ENCODE measurements at regions of chr9 and their contacts with region 1.

Region 1: GRCh38 chr9:7123743-7124142 is 366.0 kb downstream of the KDM4C start:
- DNase-seq: no peak
- H3K4me3 ChIP-seq: no peak overlapping the region
- H3K27ac ChIP-seq: no peak overlapping the region
- H3K4me1 ChIP-seq: no peaks in the 10 kb centered on the region
- H3K27me3 ChIP-seq: no peaks in the 10 kb centered on the region
- CTCF ChIP-seq: no peak

Region 2: DNA sequence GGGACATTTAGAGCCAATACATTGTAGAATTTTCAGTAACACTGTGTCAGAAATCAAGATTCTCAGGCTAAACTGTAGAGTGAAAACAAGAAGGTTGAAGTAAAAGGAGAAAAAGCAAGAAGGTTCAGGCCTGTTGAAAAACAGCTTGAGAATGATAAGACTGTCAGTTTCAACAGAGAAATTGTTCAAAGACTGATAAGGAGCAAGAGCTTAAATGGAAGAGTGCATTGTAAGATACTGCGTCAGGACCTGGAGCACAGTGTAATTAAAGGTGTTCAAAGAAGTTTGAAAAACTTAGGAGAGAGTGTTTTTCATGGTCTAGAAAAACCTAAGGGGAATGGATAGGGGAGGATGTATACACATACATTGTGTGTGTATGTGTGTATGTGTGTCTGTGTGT is 42.3 kb after region 1 on chr9:
- intact Hi-C with region 1: loop called (anchors 2 kb)
- DNase-seq: no peak
- H3K4me3 ChIP-seq: no peak overlapping the region
- H3K27ac ChIP-seq: no peak overlapping the region
- H3K4me1 ChIP-seq: no peaks in the 10 kb centered on the region
- H3K27me3 ChIP-seq: no peaks in the 10 kb centered on the region
- CTCF ChIP-seq: no peak

Measured in tibial artery (tissue), 4 donors.